ENCODE measurements at regions of chr17 and their contacts with region 1.

Region 1: DNA sequence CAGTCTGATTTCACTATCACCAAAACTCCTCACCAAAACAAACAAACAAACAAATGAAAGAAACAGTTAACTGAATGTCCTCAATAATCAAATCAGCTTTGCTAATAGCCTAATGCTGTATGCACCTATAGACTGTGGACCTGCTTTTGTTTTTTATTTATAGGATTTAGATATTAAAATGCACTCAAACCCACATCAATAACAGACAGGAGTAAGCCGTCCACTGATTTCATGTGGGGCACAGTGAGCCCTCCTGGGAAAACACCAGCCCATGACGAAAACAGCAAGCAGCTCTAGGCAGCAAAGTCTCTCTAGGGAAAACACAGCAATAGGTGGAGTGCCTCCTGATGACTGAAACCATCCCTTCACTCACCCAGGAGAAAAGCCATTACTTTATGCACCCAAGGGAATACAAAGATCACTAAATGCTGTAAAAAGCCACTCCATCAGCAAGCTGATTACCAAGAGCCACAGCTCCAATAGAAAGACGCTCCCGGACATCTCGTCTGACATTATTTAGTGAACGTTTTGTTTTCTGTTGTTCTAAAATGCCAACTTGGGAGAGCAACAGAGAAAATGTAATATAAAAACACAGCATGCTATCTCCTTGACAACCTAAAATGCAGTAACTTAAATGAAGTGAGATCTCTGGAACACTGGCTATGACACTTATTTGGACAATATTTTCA is 47.8 kb downstream of the ANKFY1 start:
- DNase-seq: no peak
- ATAC-seq: peak; percentile 75
- H3K4me3 Mint-ChIP-seq: no peak overlapping the region
- H3K27ac Mint-ChIP-seq: peak overlapping the region; percentile 19
- H3K4me1 Mint-ChIP-seq: peaks cover 13% of the 10 kb centered on the region
- H3K27me3 Mint-ChIP-seq: no peaks in the 10 kb centered on the region
- CTCF ChIP-seq: no peak

Region 2: DNA sequence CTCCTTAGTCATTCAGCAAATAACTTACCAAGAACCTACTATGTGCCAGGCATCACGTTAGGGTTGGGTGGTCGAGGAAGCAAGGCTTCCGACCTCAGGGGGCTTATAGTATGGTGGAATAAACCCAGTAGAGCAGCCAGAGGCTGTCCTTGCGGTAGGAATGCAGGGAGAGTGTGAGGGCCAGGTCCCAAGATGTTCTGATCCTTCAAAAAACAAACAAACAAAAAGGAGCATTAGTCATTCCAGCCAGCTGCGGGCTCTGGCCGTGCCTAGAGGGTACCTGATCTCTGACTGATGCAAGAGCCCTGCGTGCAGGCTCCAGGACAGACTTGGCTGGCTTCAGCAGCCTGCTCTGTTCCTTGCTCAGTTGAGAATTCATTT is 54.9 kb before region 1 on chr17:
- CTCF ChIA-PET with region 1: no interaction called
- POLR2A ChIA-PET with region 1: no interaction called
- intact Hi-C with region 1: no loop called
- DNase-seq: no peak
- ATAC-seq: no peak
- H3K4me3 Mint-ChIP-seq: no peak overlapping the region
- H3K27ac Mint-ChIP-seq: no peak overlapping the region
- H3K4me1 Mint-ChIP-seq: peaks cover 11% of the 10 kb centered on the region
- H3K27me3 Mint-ChIP-seq: no peaks in the 10 kb centered on the region
- CTCF ChIP-seq: no peak

Region 3: GRCh38 chr17:4199818-4200402 is 16.1 kb before region 1 on chr17:
- CTCF ChIA-PET with region 1: interaction called, 13 read pairs
- POLR2A ChIA-PET with region 1: interaction called, 4 read pairs
- intact Hi-C with region 1: no loop called
- DNase-seq: no peak
- ATAC-seq: peak; percentile 67
- H3K4me3 Mint-ChIP-seq: no peak overlapping the region
- H3K27ac Mint-ChIP-seq: no peak overlapping the region
- H3K4me1 Mint-ChIP-seq: no peaks in the 10 kb centered on the region
- H3K27me3 Mint-ChIP-seq: no peaks in the 10 kb centered on the region
- CTCF ChIP-seq: no peak

Region 4: GRCh38 chr17:4263282-4264215 is 47.5 kb after region 1 on chr17 and contains the start of gene ANKFY1:
- CTCF ChIA-PET with region 1: interaction called, 8 read pairs
- POLR2A ChIA-PET with region 1: no interaction called
- intact Hi-C with region 1: loop called (anchors 5 kb)
- DNase-seq: peak; percentile 98
- ATAC-seq: peak; percentile 98
- H3K4me3 Mint-ChIP-seq: peak within 1 kb of the TSS; percentile 95
- H3K27ac Mint-ChIP-seq: peak within 1 kb of the TSS; percentile 86
- H3K4me1 Mint-ChIP-seq: peaks cover 34% of the 10 kb centered on the region
- H3K27me3 Mint-ChIP-seq: no peaks in the 10 kb centered on the region
- CTCF ChIP-seq: no peak
- total RNA-seq, gene ANKFY1: 41.6 and 50.2 TPM in 2 replicates

Region 5: DNA sequence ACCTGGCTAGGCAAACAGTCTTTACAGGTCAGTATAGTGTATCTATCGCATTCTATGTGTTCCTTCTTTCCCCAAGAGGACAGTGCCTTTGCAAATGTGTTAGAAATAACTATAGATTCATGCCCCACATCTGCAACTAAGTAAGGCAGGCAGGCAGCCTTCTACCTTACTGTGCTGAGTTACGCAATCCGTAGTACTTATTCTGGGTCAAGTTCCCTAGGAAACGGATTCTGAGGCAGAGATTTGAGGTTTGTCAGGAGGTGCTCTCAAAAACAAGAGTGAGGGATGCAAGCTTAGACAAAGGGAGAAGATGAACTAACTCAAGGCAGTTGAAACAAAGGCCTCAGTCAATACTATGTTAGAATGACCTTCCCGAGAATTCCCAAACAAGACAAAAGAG is 60.5 kb after region 1 on chr17:
- CTCF ChIA-PET with region 1: no interaction called
- POLR2A ChIA-PET with region 1: no interaction called
- intact Hi-C with region 1: no loop called
- DNase-seq: no peak
- ATAC-seq: no peak
- H3K4me3 Mint-ChIP-seq: no peak overlapping the region
- H3K27ac Mint-ChIP-seq: no peak overlapping the region
- H3K4me1 Mint-ChIP-seq: no peaks in the 10 kb centered on the region
- H3K27me3 Mint-ChIP-seq: no peaks in the 10 kb centered on the region
- CTCF ChIP-seq: no peak

Region 6: DNA sequence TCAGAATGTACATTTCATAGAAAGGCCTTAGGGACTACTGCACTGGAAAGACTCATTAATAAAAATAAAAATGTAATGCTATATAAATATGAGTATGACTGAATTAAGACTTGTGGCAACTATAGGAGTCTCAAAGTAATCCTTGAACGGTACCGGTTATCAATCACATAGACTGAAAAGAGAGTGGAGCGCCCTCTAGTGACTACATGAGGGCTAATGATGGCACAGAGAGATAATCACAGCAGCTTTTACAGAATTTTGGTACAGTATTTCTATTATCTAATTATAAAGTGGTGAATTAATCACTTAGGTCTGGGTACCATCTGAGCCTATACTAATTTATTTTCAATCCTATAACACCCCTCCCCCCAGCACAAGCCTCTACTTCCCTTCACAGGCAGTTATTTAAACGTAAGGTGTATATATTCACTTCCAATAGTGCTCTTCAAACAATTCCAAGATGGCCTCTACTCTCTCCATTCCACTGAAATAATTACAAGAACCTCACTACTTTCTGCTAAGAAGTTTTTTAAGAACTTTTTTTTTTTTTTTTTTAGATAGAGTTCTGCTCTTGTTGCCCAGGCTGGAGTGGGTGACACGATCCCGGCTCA is 88.5 kb after region 1 on chr17:
- CTCF ChIA-PET with region 1: interaction called, 6 read pairs
- POLR2A ChIA-PET with region 1: no interaction called
- intact Hi-C with region 1: loop called (anchors 1 kb)
- DNase-seq: no peak
- ATAC-seq: peak; percentile 81
- H3K4me3 Mint-ChIP-seq: no peak overlapping the region
- H3K27ac Mint-ChIP-seq: no peak overlapping the region
- H3K4me1 Mint-ChIP-seq: peaks cover 20% of the 10 kb centered on the region
- H3K27me3 Mint-ChIP-seq: no peaks in the 10 kb centered on the region
- CTCF ChIP-seq: peak; percentile 53

Region 7: DNA sequence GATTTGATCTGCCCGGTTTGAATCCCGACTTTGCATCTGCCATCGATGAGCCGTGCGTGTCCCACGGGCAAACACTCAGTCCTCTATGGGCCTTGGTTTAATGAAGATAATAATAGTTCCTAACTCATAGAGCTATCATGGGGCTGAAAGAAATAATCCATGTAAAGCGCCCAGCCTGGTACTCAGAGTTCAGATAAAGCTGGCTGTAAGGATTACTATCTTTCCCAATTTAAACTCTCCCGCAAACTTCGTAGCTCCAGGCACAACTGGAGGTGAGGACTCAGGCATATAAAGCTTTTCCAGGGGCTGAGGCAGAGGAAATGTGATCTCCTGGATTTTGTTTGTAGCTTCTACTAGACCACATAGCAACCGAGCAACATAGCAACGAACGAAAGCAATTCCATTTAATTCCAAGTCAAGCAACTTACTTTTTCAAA is 409.2 kb after region 1 on chr17:
- CTCF ChIA-PET with region 1: no interaction called
- POLR2A ChIA-PET with region 1: no interaction called
- intact Hi-C with region 1: loop called (anchors 10 kb)
- DNase-seq: no peak
- ATAC-seq: no peak
- H3K4me3 Mint-ChIP-seq: no peak overlapping the region
- H3K27ac Mint-ChIP-seq: no peak overlapping the region
- H3K4me1 Mint-ChIP-seq: peaks cover 2% of the 10 kb centered on the region
- H3K27me3 Mint-ChIP-seq: peaks cover 10% of the 10 kb centered on the region
- CTCF ChIP-seq: no peak

Measured in activated B cell treated with CpG ODN at 0.5 μM for 24 hours (primary cell).